Dorsolateral prefrontal cortex (tissue), 120 donors: ENCODE measurements at regions of chr6 and their contacts with region 1.

Region 1: GRCh38 chr6:164167873-164168405 is 753.4 kb downstream of the QKI start:
- DNase-seq: peak in 3 of 10 donors; percentile 50 to 53 (median 52)
- H3K4me3 ChIP-seq: no peak overlapping the region
- H3K27ac ChIP-seq: peak overlapping the region in 19 of 59 donors; percentile 1 to 62 (median 26)
- H3K27me3 ChIP-seq: no peaks in the 10 kb centered on the region
- CTCF ChIP-seq: peak in 42 of 56 donors; percentile 12 to 66 (median 34)

Region 2: DNA sequence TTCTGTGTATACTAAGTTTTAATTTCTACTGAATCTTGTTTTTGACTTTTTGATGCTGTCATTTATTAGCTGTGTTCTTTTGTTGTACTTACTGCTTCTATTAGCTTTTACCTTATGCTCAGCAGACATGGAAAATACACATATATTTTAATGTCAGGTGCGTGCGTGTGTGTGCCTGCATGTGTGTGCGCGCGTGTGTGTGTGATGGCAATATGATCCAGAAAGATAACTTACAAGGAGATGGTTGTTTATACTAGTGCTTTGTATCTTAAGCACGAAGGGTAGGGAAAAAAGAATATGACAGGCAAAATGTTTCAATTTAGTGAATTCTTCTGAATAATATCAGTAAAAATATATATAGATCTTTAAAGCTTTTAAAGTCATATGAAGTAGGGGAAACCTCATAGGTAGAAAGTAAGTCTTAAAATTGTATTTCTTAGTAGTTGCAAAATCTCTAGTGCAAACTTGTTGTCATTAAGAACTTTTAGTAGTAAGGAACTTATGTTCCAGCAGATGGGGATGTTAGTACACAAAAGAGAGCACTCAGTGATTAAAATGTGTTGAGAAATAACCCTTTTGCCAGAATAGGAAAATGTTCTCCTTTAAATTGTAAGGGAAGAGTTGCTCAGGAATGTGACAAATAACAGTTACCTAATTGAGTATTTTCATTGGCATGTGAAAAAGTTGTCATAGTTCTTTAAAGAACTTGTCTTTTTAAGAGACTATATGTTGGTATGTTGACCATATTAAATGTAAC is 740.3 kb before region 1 on chr6:
- intact Hi-C with region 1: loop called in 1 of 2 experiments (anchors 10 kb)
- DNase-seq: no peak
- H3K4me3 ChIP-seq: peak overlapping the region in 56 of 59 donors; percentile 1 to 97 (median 58)
- H3K27ac ChIP-seq: peak overlapping the region in 49 of 59 donors; percentile 4 to 100 (median 59)
- H3K27me3 ChIP-seq: no peaks in the 10 kb centered on the region
- CTCF ChIP-seq: peak in 54 of 56 donors; percentile 8 to 68 (median 42)